ENCODE measurements at regions of chr7 and their contacts with region 1.

Region 1: DNA sequence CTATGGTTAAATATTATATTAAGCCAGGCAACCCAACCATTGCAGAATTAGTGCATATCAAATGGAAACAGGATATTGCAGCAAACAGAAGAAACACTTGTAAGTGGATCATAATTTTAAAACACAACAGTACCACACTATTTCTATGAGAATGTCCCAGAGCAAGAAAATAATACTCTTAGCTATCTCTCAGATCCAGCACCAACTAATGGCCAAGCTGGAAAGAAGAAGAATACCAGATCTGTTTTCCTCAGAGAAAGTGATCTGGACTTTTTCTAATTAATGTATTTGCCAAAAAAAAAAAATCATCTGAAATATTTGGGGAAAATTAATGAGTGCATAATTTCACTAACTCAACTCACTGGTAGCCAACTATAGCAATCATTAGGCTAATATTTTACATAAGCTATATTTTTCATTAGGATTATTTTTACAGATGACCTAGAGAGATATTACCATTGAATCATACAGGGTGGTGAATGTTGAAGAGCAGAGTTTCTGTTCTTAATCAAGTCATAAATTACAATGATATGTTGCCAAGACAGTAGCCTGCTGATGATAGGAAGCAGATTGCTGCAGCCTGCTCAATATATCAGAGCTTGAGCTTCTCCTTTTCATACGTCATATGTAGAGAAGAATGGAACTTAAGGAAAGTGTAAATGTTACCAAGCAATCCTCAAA is 995.4 kb upstream of the LRRN3 start:
- DNase-seq: no peak

Region 2: DNA sequence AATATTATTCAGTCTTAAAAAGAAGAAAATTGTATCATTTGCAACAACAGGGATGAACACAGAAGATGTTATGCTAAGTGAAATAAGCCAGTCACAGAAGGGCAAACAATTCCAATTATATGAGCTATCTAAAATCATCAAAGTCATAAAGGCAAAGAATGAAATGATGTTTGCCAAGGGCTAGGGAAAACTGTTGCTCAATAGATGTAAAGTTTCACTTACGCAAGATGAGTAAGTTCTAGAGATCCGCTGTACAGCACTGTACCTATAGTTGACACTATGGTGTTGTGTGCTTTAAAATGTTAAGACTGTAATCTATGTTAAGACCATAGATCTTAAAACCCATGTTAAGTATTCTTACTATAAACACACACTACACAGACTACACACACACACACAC is 90.8 kb after region 1 on chr7:
- intact Hi-C with region 1: no loop called
- DNase-seq: no peak

Region 3: DNA sequence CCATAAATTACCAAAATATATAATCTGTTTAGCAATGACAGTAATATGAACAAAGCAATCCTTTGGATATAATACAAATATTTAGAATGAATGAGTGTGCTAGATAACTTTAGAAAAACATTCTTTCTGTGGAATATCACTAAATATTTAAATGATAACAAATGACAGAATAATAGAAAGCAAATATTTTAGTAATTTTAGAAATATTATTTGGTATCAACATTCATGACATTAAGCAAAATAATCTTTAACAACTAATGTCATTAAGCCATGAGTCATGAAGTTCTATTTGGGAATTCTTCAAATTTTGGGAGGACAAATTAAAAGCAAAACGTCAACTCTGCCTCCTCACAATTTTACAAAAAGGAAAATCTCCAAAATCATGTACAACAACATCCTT is 150.6 kb after region 1 on chr7:
- intact Hi-C with region 1: no loop called
- DNase-seq: no peak

Region 4: DNA sequence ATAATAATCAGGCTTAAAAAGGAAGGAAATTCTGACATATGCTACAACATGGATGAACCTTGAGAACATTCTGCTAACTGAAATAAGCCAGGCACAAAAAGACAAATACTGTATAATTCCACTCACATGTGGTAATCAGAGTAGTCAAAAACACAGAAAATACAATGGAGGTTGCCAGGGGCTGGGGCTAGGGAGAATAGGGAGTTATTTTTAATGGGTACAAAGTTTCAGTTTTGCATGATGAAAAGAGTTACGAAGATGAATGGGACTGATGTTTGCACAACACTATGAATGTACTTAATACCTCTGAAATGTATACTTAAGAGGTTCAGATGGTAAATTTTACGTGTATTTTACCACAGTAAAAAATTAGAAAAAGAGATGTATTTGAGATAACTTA is 1965.1 kb after region 1 on chr7:
- intact Hi-C with region 1: loop called in 1 of 2 experiments (anchors 5 kb)
- DNase-seq: no peak

Measured in posterior vena cava (tissue), 2 donors.